Activated CD4-positive, alpha-beta T cell treated with anti-CD3 and anti-CD28 coated beads for 36 hours (primary cell): ENCODE measurements at regions of chr5 and their contacts with region 1.

Region 1: GRCh38 chr5:179907570-179908324 is at the start of gene TBC1D9B:
- DNase-seq: peak; percentile 82
- ATAC-seq: peak; percentile 90
- H3K4me3 Mint-ChIP-seq: peak within 1 kb of the TSS; percentile 92
- H3K27ac Mint-ChIP-seq: peak within 1 kb of the TSS; percentile 83
- H3K4me1 Mint-ChIP-seq: peaks cover 13% of the 10 kb centered on the region
- H3K27me3 Mint-ChIP-seq: no peaks in the 10 kb centered on the region
- total RNA-seq, gene TBC1D9B: 103 to 121 TPM

Region 2: DNA sequence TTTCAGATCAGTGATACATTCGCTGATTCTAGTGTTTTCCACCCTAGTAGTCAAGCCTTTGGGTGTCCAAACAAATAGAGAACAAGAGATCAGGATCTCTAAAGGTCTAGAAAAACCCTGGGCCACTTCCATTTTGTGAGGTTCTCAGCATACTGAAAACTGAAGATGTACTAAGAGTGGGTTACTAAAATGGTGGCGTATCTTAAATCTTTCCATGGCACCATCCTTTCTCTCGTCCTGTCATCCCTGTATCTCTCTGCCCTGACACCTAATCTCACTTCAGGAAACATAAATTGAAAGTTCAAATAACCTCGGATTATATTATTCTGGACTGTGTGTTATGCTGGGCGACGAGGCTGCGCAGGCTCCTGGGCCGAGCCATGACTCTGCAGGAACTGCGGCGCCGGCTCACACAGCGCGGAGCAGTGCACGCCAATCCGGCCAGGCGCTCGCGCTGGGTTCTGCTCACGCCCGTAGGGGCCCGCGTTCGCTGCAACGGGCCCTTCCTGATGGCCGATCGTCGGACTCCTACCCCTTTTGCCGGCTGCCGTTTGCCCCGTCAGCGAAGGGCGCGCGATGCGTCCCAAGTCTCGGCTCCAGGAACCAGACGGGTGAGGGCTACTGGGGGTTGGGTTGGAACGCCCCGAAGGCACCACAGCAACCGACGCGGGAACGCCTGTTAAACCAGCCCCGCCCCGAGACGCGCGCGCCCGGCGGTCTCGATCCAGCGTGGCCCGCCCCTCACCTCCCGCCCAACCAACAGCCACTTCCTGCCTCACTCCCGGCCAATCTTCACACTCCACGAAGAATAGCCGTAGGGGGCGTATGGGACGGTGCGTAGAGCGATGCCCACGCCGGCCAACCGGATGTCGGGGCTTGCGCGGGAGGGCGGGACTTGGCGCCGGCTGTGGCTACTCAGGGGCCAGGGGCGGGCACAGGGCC is 209.5 kb before region 1 on chr5:
- CTCF ChIA-PET with region 1: no interaction called
- POLR2A ChIA-PET with region 1: no interaction called
- intact Hi-C with region 1: loop called in 1 of 2 experiments (anchors 1 kb)
- DNase-seq: peak; percentile 99
- ATAC-seq: peak; percentile 89
- H3K4me3 Mint-ChIP-seq: peak overlapping the region; percentile 94
- H3K27ac Mint-ChIP-seq: peak overlapping the region; percentile 100
- H3K4me1 Mint-ChIP-seq: peaks cover 34% of the 10 kb centered on the region
- H3K27me3 Mint-ChIP-seq: no peaks in the 10 kb centered on the region

Region 3: GRCh38 chr5:179763215-179763945 is 144.4 kb before region 1 on chr5:
- CTCF ChIA-PET with region 1: interaction called, 10 read pairs
- POLR2A ChIA-PET with region 1: no interaction called
- intact Hi-C with region 1: loop called in 1 of 2 experiments (anchors 1 kb)
- DNase-seq: peak; percentile 70
- ATAC-seq: peak; percentile 30
- H3K4me3 Mint-ChIP-seq: no peak overlapping the region
- H3K27ac Mint-ChIP-seq: no peak overlapping the region
- H3K4me1 Mint-ChIP-seq: peaks cover 79% of the 10 kb centered on the region
- H3K27me3 Mint-ChIP-seq: no peaks in the 10 kb centered on the region

Region 4: GRCh38 chr5:179821581-179822432 is 85.9 kb before region 1 on chr5:
- CTCF ChIA-PET with region 1: no interaction called
- POLR2A ChIA-PET with region 1: no interaction called
- intact Hi-C with region 1: loop called in 1 of 2 experiments (anchors 1 kb)
- DNase-seq: peak; percentile 92
- ATAC-seq: peak; percentile 71
- H3K4me3 Mint-ChIP-seq: peak overlapping the region; percentile 92
- H3K27ac Mint-ChIP-seq: peak overlapping the region; percentile 90
- H3K4me1 Mint-ChIP-seq: peaks cover 38% of the 10 kb centered on the region
- H3K27me3 Mint-ChIP-seq: peaks cover 2% of the 10 kb centered on the region

Region 5: GRCh38 chr5:180071531-180072255 is 163.9 kb after region 1 on chr5 and contains the start of gene RNF130:
- CTCF ChIA-PET with region 1: interaction called, 4 read pairs
- POLR2A ChIA-PET with region 1: no interaction called
- intact Hi-C with region 1: loop called in 1 of 2 experiments (anchors 1 kb)
- DNase-seq: peak; percentile 93
- ATAC-seq: peak; percentile 79
- H3K4me3 Mint-ChIP-seq: peak within 1 kb of the TSS; percentile 80
- H3K27ac Mint-ChIP-seq: peak within 1 kb of the TSS; percentile 44
- H3K4me1 Mint-ChIP-seq: peaks cover 29% of the 10 kb centered on the region
- H3K27me3 Mint-ChIP-seq: no peaks in the 10 kb centered on the region
- total RNA-seq, gene RNF130: 10.3 to 13.3 TPM

Region 6: GRCh38 chr5:181005791-181006190 is 1098.0 kb after region 1 on chr5:
- CTCF ChIA-PET with region 1: no interaction called
- POLR2A ChIA-PET with region 1: no interaction called
- intact Hi-C with region 1: no loop called
- DNase-seq: no peak
- ATAC-seq: no peak
- H3K4me3 Mint-ChIP-seq: no peak overlapping the region
- H3K27ac Mint-ChIP-seq: no peak overlapping the region
- H3K4me1 Mint-ChIP-seq: no peaks in the 10 kb centered on the region
- H3K27me3 Mint-ChIP-seq: peaks cover 9% of the 10 kb centered on the region